Activated CD4-positive, alpha-beta memory T cell treated with anti-CD3 and anti-CD28 coated beads for 36 hours (primary cell): ENCODE measurements at regions of chr14 and their contacts with region 1.

Region 1: DNA sequence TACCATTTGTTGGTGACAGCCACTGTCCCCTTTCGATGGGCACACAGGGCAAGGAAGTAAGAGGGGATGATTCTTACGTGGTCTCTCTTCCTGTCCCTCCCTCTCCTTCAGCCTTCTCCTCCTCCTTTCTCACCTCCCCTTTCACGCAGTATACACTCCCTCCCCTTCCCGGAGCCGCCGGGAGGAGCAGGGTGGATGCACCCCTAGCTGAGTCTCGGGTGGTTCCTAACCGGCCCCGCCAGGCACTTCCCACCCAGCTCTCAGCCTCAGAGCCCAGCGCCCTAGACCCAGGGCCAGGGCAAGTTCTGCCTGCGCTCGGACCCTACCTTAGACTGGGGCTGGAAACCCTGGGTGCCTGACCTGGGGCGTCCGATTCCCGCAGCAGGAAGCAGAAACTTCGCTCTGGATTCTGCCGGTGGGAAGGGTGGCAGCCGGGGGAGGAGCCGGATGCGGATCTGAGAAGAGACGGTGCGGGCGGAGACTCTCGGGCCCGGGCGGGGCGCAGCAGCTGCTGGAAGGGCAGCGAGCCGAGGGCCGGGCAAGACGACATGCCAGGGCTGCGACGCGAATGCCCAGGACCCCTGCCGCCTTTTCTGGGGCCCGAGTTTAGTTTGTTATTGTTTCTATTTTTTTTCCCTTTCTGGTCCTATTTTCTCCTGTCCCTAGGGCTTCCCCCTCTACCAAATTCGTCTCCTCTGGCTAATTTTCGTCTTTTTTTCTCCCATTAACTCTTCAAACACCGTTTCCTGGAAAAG is at the start of gene TEP1:
- DNase-seq: peak; percentile 87
- H3K4me3 Mint-ChIP-seq: peak within 1 kb of the TSS; percentile 93
- H3K27ac Mint-ChIP-seq: peak within 1 kb of the TSS; percentile 96
- H3K4me1 Mint-ChIP-seq: peaks cover 40% of the 10 kb centered on the region
- H3K27me3 Mint-ChIP-seq: no peaks in the 10 kb centered on the region
- total RNA-seq, gene TEP1: 47.1 to 49.3 TPM

Region 2: GRCh38 chr14:20327005-20327869 is 86.0 kb before region 1 on chr14:
- CTCF ChIA-PET with region 1: interaction called, 17 read pairs
- POLR2A ChIA-PET with region 1: no interaction called
- intact Hi-C with region 1: no loop called
- DNase-seq: no peak
- H3K4me3 Mint-ChIP-seq: peak overlapping the region; percentile 0
- H3K27ac Mint-ChIP-seq: peak overlapping the region; percentile 43
- H3K4me1 Mint-ChIP-seq: peaks cover 40% of the 10 kb centered on the region
- H3K27me3 Mint-ChIP-seq: no peaks in the 10 kb centered on the region

Region 3: DNA sequence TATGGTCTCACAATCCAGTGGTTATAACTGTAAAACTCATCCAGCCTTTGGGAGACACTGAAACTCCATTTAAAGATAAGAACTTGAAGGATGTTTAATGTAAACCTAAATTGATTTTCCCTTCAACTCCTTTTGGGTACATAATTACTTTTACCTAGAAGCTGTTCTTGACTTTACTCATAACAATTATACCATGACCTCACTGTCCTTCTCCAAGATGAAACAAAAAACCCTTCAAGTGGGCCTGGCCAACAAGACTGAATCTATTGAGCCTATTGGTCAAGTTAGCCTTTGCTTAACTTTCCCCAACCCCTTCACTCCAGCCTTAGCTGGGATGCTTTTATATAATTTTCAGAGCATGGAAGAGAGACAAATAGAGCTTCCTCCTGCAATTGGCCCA is 47.3 kb before region 1 on chr14:
- CTCF ChIA-PET with region 1: interaction called, 8 read pairs
- POLR2A ChIA-PET with region 1: no interaction called
- intact Hi-C with region 1: loop called (anchors 1 kb)
- DNase-seq: no peak
- H3K4me3 Mint-ChIP-seq: no peak overlapping the region
- H3K27ac Mint-ChIP-seq: no peak overlapping the region
- H3K4me1 Mint-ChIP-seq: peaks cover 29% of the 10 kb centered on the region
- H3K27me3 Mint-ChIP-seq: no peaks in the 10 kb centered on the region

Region 4: GRCh38 chr14:20382526-20382925 is 30.7 kb before region 1 on chr14:
- CTCF ChIA-PET with region 1: no interaction called
- POLR2A ChIA-PET with region 1: no interaction called
- intact Hi-C with region 1: no loop called
- DNase-seq: no peak
- H3K4me3 Mint-ChIP-seq: no peak overlapping the region
- H3K27ac Mint-ChIP-seq: peak overlapping the region; percentile 15
- H3K4me1 Mint-ChIP-seq: peaks cover 2% of the 10 kb centered on the region
- H3K27me3 Mint-ChIP-seq: no peaks in the 10 kb centered on the region

Region 5: DNA sequence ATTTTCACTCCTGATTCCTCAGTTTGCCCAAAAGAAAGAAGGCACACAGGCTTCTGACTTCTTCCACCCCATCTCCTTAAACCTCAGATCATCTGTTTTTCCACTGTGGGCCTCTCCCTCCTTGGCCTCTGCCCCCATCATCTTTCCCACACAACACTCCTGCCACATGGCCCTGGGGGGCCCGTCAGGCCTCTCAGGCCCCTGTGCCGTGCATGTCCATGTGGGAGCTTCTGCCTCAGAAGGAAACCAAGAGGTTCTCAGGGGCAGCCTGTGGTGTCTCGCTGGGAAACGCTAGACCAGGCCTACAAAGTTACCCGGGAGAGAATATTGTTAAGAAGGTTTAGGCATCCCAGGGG is 14.8 kb after region 1 on chr14:
- CTCF ChIA-PET with region 1: interaction called, 12 read pairs
- POLR2A ChIA-PET with region 1: interaction called, 3 read pairs
- intact Hi-C with region 1: no loop called
- DNase-seq: no peak
- H3K4me3 Mint-ChIP-seq: no peak overlapping the region
- H3K27ac Mint-ChIP-seq: no peak overlapping the region
- H3K4me1 Mint-ChIP-seq: peaks cover 17% of the 10 kb centered on the region
- H3K27me3 Mint-ChIP-seq: no peaks in the 10 kb centered on the region

Region 6: DNA sequence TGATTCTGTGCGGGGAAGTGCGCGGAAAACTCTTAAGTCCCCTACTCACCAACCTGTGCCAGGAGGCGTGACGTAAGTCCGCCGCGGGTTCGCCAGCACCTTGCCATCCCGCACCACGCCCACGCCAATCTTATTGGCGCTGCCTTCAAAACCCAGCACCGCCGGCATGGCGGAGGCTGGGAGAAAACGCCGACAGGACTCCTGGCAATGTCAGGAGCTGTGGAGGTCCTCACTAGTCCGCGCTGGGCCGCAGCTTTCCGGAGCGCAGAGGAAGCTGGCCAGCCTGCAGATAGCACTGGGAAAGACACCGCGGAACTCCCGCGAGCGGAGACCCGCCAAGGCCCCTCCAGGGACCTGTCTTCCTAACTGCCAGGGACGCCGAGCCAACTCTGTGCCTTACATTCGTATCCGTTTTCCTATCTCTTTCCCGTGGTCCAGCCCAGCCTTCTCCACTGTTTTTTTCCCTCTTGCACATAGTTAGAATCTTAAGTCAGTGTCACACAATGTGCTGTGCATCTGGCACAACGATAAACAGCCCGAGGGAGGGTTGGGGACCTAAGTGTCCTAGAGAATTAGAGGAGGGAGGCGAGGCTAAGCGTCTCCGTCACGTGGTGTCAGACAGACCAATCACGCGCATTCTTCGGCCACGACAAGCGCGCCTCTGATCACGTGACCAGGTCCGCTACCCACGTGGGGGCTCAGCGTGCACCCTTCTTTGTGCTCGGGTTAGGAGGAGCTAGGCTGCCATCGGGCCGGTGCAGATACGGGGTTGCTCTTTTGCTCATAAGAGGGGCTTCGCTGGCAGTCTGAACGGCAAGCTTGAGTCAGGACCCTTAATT is 41.5 kb after region 1 on chr14 and contains the starts of genes APEX1 and OSGEP:
- CTCF ChIA-PET with region 1: interaction called, 29 read pairs
- POLR2A ChIA-PET with region 1: interaction called, 16 read pairs
- intact Hi-C with region 1: loop called (anchors 1 kb)
- DNase-seq: peak; percentile 99
- H3K4me3 Mint-ChIP-seq: peak within 1 kb of the TSS; percentile 13
- H3K27ac Mint-ChIP-seq: no peak within 1 kb of the TSS
- H3K4me1 Mint-ChIP-seq: peaks cover 22% of the 10 kb centered on the region
- H3K27me3 Mint-ChIP-seq: no peaks in the 10 kb centered on the region
- total RNA-seq, gene APEX1: 186 to 193 TPM
- total RNA-seq, gene OSGEP: 39.2 to 41.0 TPM

Region 7: DNA sequence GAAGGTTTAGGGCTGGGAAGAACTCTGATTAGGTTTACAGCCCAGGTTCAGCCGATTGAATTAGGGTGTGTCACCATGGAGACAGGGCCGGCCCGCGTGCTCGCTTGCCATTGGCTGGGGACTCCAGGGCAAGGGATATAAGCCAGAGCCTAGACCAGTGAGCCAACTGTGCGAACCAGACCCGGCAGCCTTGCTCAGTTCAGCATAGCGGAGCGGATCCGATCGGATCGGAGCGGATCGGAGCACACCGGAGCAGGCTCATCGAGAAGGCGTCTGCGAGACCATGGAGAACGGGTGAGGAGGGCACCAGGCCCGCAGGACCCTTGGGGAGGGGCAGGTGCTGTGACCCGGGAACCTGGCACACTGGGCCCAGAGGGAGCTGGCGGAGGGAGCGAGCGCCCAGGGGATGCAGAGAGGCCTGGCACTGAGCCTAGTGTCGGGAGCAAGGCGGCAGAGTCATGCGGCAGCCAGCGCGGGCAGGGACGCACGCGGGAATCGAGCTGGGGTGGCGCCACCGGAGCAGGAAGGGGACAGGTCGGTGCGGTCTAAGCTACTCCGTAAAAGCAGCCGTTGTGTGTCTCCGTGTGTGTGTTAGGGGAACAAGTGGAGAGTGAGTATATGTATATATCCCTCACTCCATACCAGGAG is 56.1 kb after region 1 on chr14 and contains the start of gene PNP:
- CTCF ChIA-PET with region 1: interaction called, 7 read pairs
- POLR2A ChIA-PET with region 1: interaction called, 7 read pairs
- intact Hi-C with region 1: loop called (anchors 1 kb)
- DNase-seq: peak; percentile 93
- H3K4me3 Mint-ChIP-seq: peak within 1 kb of the TSS; percentile 89
- H3K27ac Mint-ChIP-seq: peak within 1 kb of the TSS; percentile 99
- H3K4me1 Mint-ChIP-seq: peaks cover 39% of the 10 kb centered on the region
- H3K27me3 Mint-ChIP-seq: no peaks in the 10 kb centered on the region
- total RNA-seq, gene PNP: 178 to 179 TPM